ENCODE measurements at regions of chr9 and their contacts with region 1.

Region 1: GRCh38 chr9:94672811-94673487 is 33.6 kb upstream of the FBP1 start:
- DNase-seq: no peak

Region 2: GRCh38 chr9:92764988-92765936 is 1907.7 kb before region 1 on chr9:
- intact Hi-C with region 1: loop called in 1 of 2 experiments (anchors 5 kb)
- DNase-seq: peak; percentile 100

Region 3: DNA sequence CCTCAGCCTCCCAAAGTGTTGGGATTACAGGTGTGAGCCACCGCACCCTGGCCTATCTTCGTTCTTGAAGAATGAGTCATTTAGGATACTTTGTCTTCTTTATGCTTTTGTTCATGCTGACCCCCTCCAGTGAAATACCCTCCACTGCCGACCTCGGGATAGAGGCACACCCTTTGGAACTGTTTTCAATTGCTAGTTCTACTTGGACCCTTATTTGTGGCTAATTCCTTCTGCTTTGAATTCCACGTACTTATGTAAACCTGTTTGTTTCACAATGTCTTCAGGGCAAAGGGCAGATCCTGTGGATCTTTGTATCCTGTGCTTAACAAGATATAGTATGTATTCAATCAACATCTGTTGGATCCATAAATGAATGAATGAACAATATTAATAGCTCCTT is 33.9 kb after region 1 on chr9:
- intact Hi-C with region 1: loop called in 1 of 2 experiments (anchors 1 kb)
- DNase-seq: no peak

Region 4: DNA sequence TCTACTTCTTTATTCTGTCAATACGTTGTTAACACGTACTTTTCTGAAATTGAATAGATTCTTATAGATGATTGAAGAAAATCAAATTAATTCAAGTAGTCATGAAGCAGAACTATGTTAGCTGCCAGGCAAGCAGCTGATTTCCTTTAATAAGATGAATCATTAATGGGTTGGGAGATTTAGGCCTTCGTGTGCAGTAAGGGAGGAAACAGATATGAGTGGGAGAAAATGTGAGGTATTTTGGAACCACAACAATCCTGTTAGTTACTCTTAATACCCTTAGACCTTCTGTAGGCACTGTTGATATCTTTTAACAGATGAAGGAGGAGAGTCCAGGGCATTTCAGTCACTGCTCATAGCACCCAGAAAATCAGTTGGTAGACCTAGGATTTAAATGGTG is 174.5 kb after region 1 on chr9:
- intact Hi-C with region 1: no loop called
- DNase-seq: no peak

Measured in posterior vena cava (tissue), 2 donors.